ENCODE measurements at regions of chr11 and their contacts with region 1.

Region 1: GRCh38 chr11:61967116-61967923 is at the start of gene FTH1:
- DNase-seq: peak; percentile 93
- ATAC-seq: peak; percentile 63
- H3K4me3 Mint-ChIP-seq: peak within 1 kb of the TSS; percentile 93
- H3K27ac Mint-ChIP-seq: peak within 1 kb of the TSS; percentile 97
- H3K4me1 Mint-ChIP-seq: peaks cover 72% of the 10 kb centered on the region
- H3K27me3 Mint-ChIP-seq: no peaks in the 10 kb centered on the region
- CTCF ChIP-seq: no peak
- total RNA-seq, gene FTH1: 865 and 906 TPM in 2 replicates

Region 2: GRCh38 chr11:61885166-61885778 is 82.0 kb before region 1 on chr11:
- CTCF ChIA-PET with region 1: interaction called, 3 read pairs
- POLR2A ChIA-PET with region 1: interaction called, 45 read pairs
- intact Hi-C with region 1: no loop called
- DNase-seq: no peak
- ATAC-seq: no peak
- H3K4me3 Mint-ChIP-seq: no peak overlapping the region
- H3K27ac Mint-ChIP-seq: no peak overlapping the region
- H3K4me1 Mint-ChIP-seq: peaks cover 54% of the 10 kb centered on the region
- H3K27me3 Mint-ChIP-seq: no peaks in the 10 kb centered on the region
- CTCF ChIP-seq: no peak

Region 3: GRCh38 chr11:61947486-61948210 is 19.7 kb before region 1 on chr11:
- CTCF ChIA-PET with region 1: interaction called, 15 read pairs
- POLR2A ChIA-PET with region 1: interaction called, 15 read pairs
- intact Hi-C with region 1: no loop called
- DNase-seq: peak; percentile 51
- ATAC-seq: peak; percentile 92
- H3K4me3 Mint-ChIP-seq: no peak overlapping the region
- H3K27ac Mint-ChIP-seq: no peak overlapping the region
- H3K4me1 Mint-ChIP-seq: peaks cover 11% of the 10 kb centered on the region
- H3K27me3 Mint-ChIP-seq: no peaks in the 10 kb centered on the region
- CTCF ChIP-seq: peak; percentile 35

Region 4: GRCh38 chr11:61999141-61999975 is 32.0 kb after region 1 on chr11:
- CTCF ChIA-PET with region 1: no interaction called
- POLR2A ChIA-PET with region 1: interaction called, 10 read pairs
- intact Hi-C with region 1: no loop called
- DNase-seq: no peak
- ATAC-seq: no peak
- H3K4me3 Mint-ChIP-seq: no peak overlapping the region
- H3K27ac Mint-ChIP-seq: no peak overlapping the region
- H3K4me1 Mint-ChIP-seq: peaks cover under 1% of the 10 kb centered on the region
- H3K27me3 Mint-ChIP-seq: peaks cover 3% of the 10 kb centered on the region
- CTCF ChIP-seq: no peak

Region 5: DNA sequence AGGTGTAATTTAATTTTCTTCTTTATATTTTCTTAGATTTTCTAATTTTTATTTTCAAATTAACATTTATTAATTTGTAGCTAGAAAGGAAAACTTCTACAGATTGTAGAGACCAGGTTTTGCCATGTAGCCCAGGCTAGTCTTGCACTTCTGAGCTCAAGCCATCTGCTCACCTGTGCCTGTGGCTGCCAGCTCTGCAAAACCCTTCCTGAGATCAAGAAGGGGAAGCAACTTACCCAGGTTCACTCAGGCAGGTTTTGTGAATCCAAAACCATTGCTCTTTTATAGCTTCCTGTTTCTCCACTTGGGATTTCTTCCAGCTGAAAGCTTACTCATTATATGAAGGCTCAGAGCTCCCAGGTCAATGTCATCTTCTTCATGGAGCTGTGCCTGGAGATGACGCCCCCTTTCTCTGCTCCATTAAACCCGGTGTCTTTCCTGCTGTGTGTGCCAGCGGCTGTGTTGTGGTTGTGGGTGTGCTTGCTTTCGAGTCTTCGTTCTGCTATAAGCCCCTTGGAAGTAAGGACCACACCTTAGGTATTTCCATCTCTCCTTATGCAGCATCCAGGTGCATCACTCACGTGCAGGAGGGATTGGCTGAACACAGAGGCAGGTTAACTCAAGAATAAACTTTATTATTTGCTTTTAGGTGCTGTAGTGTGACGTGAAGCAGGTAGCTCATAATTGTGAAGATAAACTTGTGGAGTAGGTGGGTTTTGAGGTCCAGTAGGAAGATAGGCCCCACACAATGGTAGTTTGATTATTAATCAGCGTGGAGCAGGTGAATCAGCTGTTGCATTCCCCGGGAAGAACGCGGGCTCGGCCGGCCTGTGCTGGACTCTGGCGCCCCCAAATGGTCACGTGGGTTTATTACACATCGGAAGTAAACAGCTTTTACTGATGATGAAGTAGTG is 114.3 kb after region 1 on chr11:
- CTCF ChIA-PET with region 1: interaction called, 23 read pairs
- POLR2A ChIA-PET with region 1: interaction called, 21 read pairs
- intact Hi-C with region 1: loop called (anchors 5 kb)
- DNase-seq: peak; percentile 65
- ATAC-seq: peak; percentile 82
- H3K4me3 Mint-ChIP-seq: peak overlapping the region; percentile 5
- H3K27ac Mint-ChIP-seq: no peak overlapping the region
- H3K4me1 Mint-ChIP-seq: peaks cover 7% of the 10 kb centered on the region
- H3K27me3 Mint-ChIP-seq: no peaks in the 10 kb centered on the region
- CTCF ChIP-seq: peak; percentile 59

Region 6: GRCh38 chr11:62315431-62315830 is 348.1 kb after region 1 on chr11:
- CTCF ChIA-PET with region 1: no interaction called
- POLR2A ChIA-PET with region 1: no interaction called
- intact Hi-C with region 1: no loop called
- DNase-seq: no peak
- ATAC-seq: no peak
- H3K4me3 Mint-ChIP-seq: no peak overlapping the region
- H3K27ac Mint-ChIP-seq: no peak overlapping the region
- H3K4me1 Mint-ChIP-seq: peaks cover 12% of the 10 kb centered on the region
- H3K27me3 Mint-ChIP-seq: peaks cover 39% of the 10 kb centered on the region
- CTCF ChIP-seq: no peak

Measured in activated B cell treated with CpG ODN at 0.5 μM for 24 hours (primary cell).